Pancreas (tissue), 10 donors: ENCODE measurements at regions of chr6 and their contacts with region 1.

Region 1: DNA sequence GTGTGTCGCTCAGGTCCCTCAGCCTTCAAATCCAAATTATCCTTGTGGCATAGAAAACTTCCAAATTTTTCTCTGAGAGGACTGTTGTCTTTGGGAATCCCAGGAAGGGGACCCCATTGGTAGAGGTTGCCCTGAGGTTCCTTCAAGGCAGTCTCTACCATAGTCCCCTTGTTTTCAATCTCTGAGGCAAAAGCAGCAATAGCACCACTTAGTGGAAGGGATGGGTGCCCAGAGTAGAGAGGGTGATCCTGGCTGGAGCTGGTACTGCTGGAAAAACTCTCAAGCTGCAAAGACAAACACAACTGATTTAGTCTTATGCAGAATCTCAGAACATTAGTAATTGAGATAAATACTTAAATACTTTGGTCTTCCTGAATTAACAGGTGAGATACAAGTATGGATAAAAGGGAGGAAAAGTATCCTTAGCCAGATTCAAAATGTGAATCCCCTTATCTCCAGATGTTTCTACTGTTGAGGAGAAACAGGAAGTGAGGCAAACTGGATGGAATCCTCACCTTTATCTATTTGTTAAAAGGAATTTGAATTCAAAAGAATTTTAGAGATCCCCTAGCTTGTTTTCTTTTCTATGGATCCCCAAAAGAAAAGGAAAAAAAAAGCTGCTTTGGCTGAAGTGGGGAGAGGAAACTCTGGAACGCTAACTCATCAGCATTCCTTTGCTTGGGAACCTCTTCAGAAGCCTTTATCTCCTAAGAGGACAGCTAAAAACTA is 13.4 kb downstream of the ZNF318 start:
- DNase-seq: peak in 1 of 6 donors; percentile 29
- ATAC-seq: peak in 3 of 4 donors; percentile 66 to 97 (median 82)
- H3K4me3 ChIP-seq: no peak overlapping the region
- H3K27ac ChIP-seq: no peak overlapping the region
- H3K4me1 ChIP-seq: no peaks in the 10 kb centered on the region
- H3K27me3 ChIP-seq: no peaks in the 10 kb centered on the region
- CTCF ChIP-seq: peak in 2 of 4 donors; percentile 20 to 22

Region 2: DNA sequence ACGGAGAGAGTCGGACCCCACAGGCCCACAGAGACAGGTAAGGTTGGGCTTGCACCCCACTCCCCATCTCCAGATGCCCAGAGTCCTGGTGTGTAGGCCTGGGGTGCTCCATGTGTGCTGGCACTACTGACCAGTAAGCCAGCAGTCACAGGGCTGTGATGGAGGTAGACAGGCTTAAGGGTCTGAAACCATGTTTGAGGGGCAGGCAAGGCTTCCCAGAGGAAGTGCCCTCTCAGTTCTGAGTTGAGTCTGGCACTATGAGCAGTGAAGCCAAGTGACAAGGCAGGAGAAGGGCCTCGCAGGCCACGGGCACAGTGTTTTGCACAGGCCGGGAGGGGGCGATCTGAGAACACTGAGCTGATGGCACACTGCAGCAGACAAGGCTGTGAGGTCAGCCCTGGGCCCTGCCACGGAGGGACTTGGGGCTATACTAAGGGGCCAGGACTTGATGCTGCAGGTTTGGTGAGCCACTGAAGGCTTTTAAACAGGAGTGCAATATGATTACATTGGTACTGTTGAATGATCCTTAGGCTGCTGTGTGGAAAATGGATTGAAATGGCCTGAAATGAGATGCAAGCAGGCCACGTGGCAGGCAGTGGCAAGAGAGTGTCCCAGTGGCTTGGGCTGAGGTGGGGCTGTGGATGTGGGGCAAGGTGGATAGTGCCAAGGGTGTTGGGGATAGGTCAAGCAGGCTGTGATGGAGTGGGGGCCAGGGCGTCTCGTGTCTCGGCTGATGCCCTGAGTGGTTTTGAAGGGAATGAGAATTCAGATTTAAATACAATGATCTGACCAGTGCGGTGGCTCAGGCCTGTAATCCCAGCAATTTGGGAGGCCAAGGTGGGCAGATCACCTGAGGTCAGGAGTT is 92.5 kb before region 1 on chr6:
- intact Hi-C with region 1: loop called in 1 of 3 experiments (anchors 5 kb)
- DNase-seq: peak; percentile 72 to 92 (median 82)
- ATAC-seq: peak; percentile 69 to 89 (median 84)
- H3K4me3 ChIP-seq: no peak overlapping the region
- H3K27ac ChIP-seq: no peak overlapping the region
- H3K4me1 ChIP-seq: peaks cover 0 to 18% (median 10%) of the 10 kb centered on the region in 3 donors
- H3K27me3 ChIP-seq: no peaks in the 10 kb centered on the region
- CTCF ChIP-seq: peak; percentile 52 to 80 (median 64)

Region 3: DNA sequence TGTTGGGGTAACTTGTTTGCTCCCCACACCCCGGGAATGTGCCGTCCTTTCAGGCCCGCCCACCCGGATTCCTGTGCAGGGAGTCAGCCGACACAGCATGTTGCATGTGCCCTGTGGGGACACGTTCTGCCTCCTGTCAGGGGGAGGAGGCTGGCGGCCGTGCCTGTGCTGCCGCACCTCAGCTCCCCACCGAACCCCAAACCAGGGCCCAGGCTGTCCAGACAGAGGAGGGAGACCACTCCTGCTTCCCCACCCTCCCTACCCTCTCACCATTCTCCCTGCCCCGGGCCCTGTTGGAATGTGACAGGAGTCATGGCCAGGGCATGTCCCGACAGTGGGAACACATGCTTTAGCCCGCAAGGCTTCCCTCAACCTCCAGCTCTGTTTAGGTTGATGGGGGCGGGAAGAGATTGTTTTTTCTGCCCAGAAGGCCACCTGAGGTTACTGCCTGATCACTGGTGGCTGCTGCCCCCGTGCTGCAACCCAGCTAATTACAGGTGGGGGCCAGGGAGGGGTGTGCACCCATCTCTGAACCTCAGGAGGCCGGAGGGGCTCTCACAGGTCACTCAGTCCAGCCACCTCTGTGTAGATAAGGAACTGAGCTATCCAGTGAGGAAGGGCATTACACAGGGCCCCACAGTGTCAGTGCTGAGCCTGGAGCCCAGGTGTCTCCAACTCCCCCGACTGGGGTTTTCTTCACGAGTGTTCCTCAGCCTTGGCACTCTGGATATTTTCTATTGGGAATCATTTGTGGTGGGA is 140.5 kb after region 1 on chr6:
- intact Hi-C with region 1: no loop called
- DNase-seq: no peak
- ATAC-seq: peak in 3 of 4 donors; percentile 28 to 64 (median 42)
- H3K4me3 ChIP-seq: no peak overlapping the region
- H3K27ac ChIP-seq: no peak overlapping the region
- H3K4me1 ChIP-seq: no peaks in the 10 kb centered on the region
- H3K27me3 ChIP-seq: no peaks in the 10 kb centered on the region
- CTCF ChIP-seq: peak in 1 of 4 donors; percentile 10